Uterus (tissue), 4 donors: ENCODE measurements at regions of chr10 and their contacts with region 1.

Region 1: GRCh38 chr10:99304862-99305229 is 24.3 kb upstream of the CNNM1 start:
- DNase-seq: no peak
- H3K4me3 ChIP-seq: no peak overlapping the region
- H3K27ac ChIP-seq: no peak overlapping the region
- H3K4me1 ChIP-seq: no peaks in the 10 kb centered on the region
- H3K27me3 ChIP-seq: no peaks in the 10 kb centered on the region
- CTCF ChIP-seq: no peak
- POLR2A ChIP-seq: no peak

Region 2: GRCh38 chr10:99430451-99431189 is 125.8 kb after region 1 on chr10 and contains the start of gene GOT1:
- intact Hi-C with region 1: no loop called
- DNase-seq: peak; percentile 94 to 97
- H3K4me3 ChIP-seq: peak within 1 kb of the TSS; percentile 74 to 94
- H3K27ac ChIP-seq: peak within 1 kb of the TSS; percentile 70 to 89
- H3K4me1 ChIP-seq: no peaks in the 10 kb centered on the region
- H3K27me3 ChIP-seq: no peaks in the 10 kb centered on the region
- CTCF ChIP-seq: no peak
- POLR2A ChIP-seq: peak; percentile 28 to 83
- total RNA-seq, gene GOT1: 18.4 to 35.0 (median 22.6) TPM

Region 3: DNA sequence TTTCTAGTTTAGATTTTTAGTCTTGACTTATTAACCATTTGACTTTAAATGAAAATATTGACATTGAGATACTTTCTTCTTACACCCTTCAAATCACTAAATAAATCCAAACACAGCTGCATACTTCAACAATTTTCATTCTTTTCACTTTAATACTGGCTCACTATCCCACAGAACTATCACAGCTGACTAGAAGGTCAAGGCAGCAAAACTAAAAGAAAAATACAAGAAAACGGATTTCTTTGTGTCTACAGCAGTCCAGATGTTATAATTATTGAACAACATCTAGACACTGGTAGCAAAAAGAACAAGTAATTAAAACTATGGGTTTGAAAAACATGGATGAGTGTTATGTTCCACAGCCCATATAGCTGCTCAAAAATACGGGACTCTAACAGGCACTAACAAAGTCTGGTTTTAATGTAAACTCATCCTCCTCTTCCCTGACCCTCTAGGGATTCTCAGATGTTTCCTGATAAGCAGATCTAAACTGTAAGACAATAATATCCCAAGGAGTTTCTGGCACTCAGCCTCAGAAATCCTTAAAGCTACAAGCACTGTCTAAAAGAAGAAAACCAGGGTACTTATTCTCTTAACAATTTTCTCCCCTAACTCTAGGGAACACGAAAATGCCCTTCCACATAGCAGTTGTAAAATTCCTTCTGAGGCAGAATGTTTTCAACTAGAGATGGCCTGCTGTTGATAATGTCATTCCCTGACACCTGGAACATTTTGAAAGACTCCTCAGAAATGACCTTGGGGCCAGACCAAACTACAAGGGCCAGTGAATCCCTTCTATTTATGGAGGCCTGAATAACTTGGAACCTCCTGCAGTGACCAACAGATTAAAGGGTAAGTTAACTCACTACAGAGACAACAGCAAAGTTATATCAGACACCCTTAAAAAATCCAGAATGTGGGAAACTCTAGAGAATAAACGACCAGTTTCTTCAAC is 692.1 kb after region 1 on chr10:
- intact Hi-C with region 1: loop called (anchors 5 kb)
- DNase-seq: no peak
- H3K4me3 ChIP-seq: no peak overlapping the region
- H3K27ac ChIP-seq: peak overlapping the region; percentile 46 to 66
- H3K4me1 ChIP-seq: peaks cover 0 to 6% of the 10 kb centered on the region in 2 donors
- H3K27me3 ChIP-seq: no peaks in the 10 kb centered on the region
- CTCF ChIP-seq: no peak
- POLR2A ChIP-seq: no peak